Right cardiac atrium (tissue), 5 donors: ENCODE measurements at regions of chrX and their contacts with region 1.

Region 1: GRCh38 chrX:56248492-56248891 is 16.3 kb downstream of the KLF8 start:
- DNase-seq: peak; percentile 44 to 63 (median 48)
- ATAC-seq: peak; percentile 38 to 59
- H3K4me3 ChIP-seq: no peak overlapping the region
- H3K27ac ChIP-seq: no peak overlapping the region
- H3K4me1 ChIP-seq: no peaks in the 10 kb centered on the region
- H3K27me3 ChIP-seq: no peaks in the 10 kb centered on the region

Region 2: DNA sequence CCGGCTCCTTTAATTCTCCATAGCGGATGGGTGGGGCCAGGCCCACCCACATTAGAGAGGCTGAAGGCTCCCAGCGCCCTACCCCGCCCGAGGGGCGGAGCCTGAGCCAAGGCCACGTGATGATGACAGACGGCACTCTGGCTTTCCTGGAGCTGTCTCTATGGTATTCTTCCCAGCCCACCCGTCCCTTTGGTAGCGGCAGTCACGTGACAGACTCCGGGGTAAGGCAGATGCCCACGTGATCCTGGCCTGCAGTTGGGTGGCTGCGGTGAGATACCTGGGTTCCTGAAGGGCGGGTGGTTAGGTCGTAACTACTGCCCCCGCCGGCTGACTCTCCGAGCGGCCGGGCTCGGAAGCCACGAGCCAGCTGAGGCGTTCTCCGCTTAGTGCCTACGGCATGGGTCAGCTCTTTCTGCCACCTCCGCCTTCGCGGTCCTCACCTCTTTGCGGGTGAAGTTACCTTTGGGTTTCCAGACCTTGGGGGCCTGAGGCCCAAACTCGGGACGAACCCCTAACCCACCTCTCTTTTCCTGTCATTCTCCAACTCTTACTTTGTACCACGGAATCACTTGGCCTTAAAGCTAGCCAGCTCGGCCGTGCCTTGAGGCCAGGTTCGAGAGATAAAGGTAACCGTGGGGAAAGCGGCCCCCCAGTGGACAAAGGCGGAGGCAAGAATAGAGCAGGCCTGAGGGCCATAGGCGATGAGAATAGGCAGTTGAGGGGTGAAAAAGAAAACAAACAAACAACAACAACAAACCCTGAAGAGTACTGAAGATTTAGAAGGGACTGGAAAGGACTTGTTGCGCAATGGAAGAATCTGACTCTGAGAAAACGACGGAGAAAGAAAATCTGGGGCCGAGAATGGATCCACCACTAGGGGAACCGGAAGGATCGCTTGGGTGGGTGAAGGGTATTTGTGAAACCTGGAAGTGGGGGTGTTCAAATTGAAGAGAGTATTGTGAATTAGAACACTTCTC is 530.7 kb before region 1 on chrX and contains the start of gene RRAGB:
- intact Hi-C with region 1: loop called in 1 of 4 experiments (anchors 10 kb)
- DNase-seq: peak; percentile 93 to 97 (median 97)
- ATAC-seq: peak; percentile 100
- H3K4me3 ChIP-seq: peak within 1 kb of the TSS; percentile 59
- H3K27ac ChIP-seq: peak within 1 kb of the TSS; percentile 93
- H3K4me1 ChIP-seq: no peaks in the 10 kb centered on the region
- H3K27me3 ChIP-seq: no peaks in the 10 kb centered on the region
- total RNA-seq, gene RRAGB: 11.6 to 15.1 (median 13.6) TPM

Region 3: GRCh38 chrX:56120242-56120641 is 128.2 kb before region 1 on chrX:
- intact Hi-C with region 1: no loop called
- DNase-seq: no peak
- ATAC-seq: no peak
- H3K4me3 ChIP-seq: no peak overlapping the region
- H3K27ac ChIP-seq: no peak overlapping the region
- H3K4me1 ChIP-seq: no peaks in the 10 kb centered on the region
- H3K27me3 ChIP-seq: no peaks in the 10 kb centered on the region